ENCODE measurements at regions of chr14 and their contacts with region 1.

Region 1: DNA sequence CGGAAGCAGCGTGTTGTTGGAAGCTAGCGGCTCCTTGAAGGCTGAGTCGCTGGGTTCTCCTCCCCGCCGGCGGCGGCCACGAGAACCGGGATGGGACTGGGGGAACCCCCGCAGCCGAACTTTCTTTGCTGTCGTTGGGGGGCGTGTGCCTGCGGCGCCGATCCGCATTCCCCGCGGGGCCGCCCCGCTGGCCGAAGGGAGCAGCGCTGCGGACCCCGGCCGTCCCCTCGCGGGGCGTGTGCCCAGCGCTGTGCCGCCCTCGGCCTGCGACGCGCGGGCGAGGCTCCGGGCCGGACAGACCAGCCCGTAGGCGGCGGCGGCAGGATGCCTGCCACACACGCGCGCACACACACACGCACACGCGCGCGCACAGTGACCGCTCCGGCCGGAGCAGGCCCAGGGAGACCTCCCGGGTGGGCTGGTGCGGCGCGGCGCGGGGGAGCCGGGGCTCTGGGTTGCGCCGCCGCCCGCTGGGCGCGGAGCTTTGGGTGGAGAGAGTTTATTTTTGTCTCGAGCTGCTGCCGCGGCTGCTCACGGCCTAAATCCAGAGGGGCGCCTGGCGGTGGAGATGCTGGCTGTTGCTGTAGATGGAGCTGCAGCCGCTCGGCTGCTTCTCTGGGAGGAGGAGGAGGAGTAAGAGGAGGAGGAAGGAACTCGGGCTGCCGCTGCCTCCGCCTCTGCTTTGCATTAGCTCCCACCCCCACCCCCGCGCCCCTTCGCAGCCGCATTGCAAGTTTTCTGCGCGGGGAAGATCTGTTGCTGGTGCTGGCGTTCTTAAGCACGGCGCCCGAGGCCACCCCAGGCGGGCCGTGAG is at the start of gene SAMD4A:
- DNase-seq: peak; percentile 63
- ATAC-seq: peak; percentile 30
- H3K4me3 Mint-ChIP-seq: peak within 1 kb of the TSS; percentile 99
- H3K27ac Mint-ChIP-seq: peak within 1 kb of the TSS; percentile 96
- H3K4me1 Mint-ChIP-seq: peaks cover 28% of the 10 kb centered on the region
- H3K27me3 Mint-ChIP-seq: peaks cover 4% of the 10 kb centered on the region
- CTCF ChIP-seq: no peak
- total RNA-seq, gene SAMD4A: 6.4 and 8.7 TPM in 2 replicates

Region 2: GRCh38 chr14:54381821-54382220 is 184.8 kb before region 1 on chr14:
- CTCF ChIA-PET with region 1: no interaction called
- POLR2A ChIA-PET with region 1: no interaction called
- intact Hi-C with region 1: no loop called
- DNase-seq: no peak
- ATAC-seq: no peak
- H3K4me3 Mint-ChIP-seq: no peak overlapping the region
- H3K27ac Mint-ChIP-seq: no peak overlapping the region
- H3K4me1 Mint-ChIP-seq: peaks cover 25% of the 10 kb centered on the region
- H3K27me3 Mint-ChIP-seq: peaks cover 24% of the 10 kb centered on the region
- CTCF ChIP-seq: no peak

Region 3: GRCh38 chr14:54396493-54397335 is 169.9 kb before region 1 on chr14 and contains the start of gene CDKN3:
- CTCF ChIA-PET with region 1: no interaction called
- POLR2A ChIA-PET with region 1: interaction called, 3 read pairs
- intact Hi-C with region 1: loop called (anchors 1 kb)
- DNase-seq: peak; percentile 94
- ATAC-seq: peak; percentile 94
- H3K4me3 Mint-ChIP-seq: peak within 1 kb of the TSS; percentile 86
- H3K27ac Mint-ChIP-seq: peak within 1 kb of the TSS; percentile 82
- H3K4me1 Mint-ChIP-seq: peaks cover 23% of the 10 kb centered on the region
- H3K27me3 Mint-ChIP-seq: no peaks in the 10 kb centered on the region
- CTCF ChIP-seq: no peak
- total RNA-seq, gene CDKN3: 0.91 and 1.6 TPM in 2 replicates

Region 4: DNA sequence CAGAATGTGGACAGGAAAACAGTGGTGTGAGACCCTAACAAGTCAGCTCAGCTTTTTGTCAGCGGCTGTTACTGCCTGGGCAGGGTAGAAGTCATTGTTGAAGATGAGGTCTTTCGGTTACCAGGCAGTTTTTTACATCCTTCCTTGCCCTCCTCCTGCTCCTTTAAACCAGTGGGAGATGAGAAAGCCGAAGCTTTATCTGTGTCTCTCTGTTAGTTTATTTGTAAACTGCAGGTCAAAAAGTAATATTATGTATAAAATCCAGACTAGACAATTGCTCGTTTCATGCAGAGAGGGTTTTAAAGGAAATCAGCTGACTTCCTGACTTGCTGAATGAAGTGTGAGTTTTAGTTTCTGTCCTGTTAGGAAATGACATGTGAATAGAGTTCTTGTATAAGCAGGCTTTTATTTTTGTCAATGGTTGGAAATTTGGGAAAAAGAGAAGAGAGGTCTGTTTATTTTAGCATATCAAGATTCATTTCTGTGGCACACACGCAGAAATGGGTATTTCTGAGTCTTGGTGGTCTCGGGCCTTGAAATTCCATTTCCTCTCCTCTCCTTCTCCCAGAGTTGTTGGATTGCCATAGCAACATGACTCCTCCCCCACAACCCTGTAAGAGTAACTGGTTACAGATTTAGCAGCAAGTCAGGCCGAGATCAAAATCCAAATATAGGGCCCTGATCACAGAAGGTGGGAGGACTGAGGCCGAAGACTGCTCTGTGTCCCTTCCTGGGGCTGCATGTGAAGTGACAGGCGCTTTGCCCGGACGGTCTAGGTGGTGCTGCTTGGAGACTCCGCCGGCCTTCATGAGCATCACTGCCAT is 61.1 kb after region 1 on chr14:
- CTCF ChIA-PET with region 1: interaction called, 5 read pairs
- POLR2A ChIA-PET with region 1: interaction called, 27 read pairs
- intact Hi-C with region 1: loop called (anchors 1 kb)
- DNase-seq: no peak
- ATAC-seq: peak; percentile 69
- H3K4me3 Mint-ChIP-seq: peak overlapping the region; percentile 79
- H3K27ac Mint-ChIP-seq: peak overlapping the region; percentile 91
- H3K4me1 Mint-ChIP-seq: peaks cover 51% of the 10 kb centered on the region
- H3K27me3 Mint-ChIP-seq: no peaks in the 10 kb centered on the region
- CTCF ChIP-seq: no peak

Region 5: DNA sequence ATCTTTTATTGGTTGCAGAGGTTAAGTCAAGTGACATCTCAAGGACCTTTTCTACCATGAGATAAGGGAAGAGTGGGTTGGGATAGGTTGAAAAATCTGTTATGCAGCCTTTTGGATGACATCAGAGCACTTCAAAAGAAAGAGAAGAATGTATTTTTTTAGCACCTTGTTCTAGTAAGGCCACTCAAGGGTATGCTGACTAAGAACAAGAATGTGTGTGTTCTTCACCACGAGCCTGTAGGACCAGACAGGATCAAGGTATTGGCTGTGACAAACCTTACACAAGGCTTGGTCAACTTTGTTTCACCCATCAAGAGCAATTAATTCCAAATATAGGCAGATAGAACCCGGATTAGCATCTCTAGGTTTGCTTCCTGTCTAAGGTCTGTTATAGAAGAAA is 142.8 kb after region 1 on chr14:
- CTCF ChIA-PET with region 1: no interaction called
- POLR2A ChIA-PET with region 1: no interaction called
- intact Hi-C with region 1: no loop called
- DNase-seq: no peak
- ATAC-seq: peak; percentile 58
- H3K4me3 Mint-ChIP-seq: no peak overlapping the region
- H3K27ac Mint-ChIP-seq: no peak overlapping the region
- H3K4me1 Mint-ChIP-seq: peaks cover 30% of the 10 kb centered on the region
- H3K27me3 Mint-ChIP-seq: no peaks in the 10 kb centered on the region
- CTCF ChIP-seq: no peak

Region 6: GRCh38 chr14:54730156-54730961 is 163.7 kb after region 1 on chr14:
- CTCF ChIA-PET with region 1: interaction called, 8 read pairs
- POLR2A ChIA-PET with region 1: interaction called, 16 read pairs
- intact Hi-C with region 1: loop called (anchors 1 kb)
- DNase-seq: no peak
- ATAC-seq: peak; percentile 90
- H3K4me3 Mint-ChIP-seq: peak overlapping the region; percentile 78
- H3K27ac Mint-ChIP-seq: peak overlapping the region; percentile 88
- H3K4me1 Mint-ChIP-seq: peaks cover 22% of the 10 kb centered on the region
- H3K27me3 Mint-ChIP-seq: no peaks in the 10 kb centered on the region
- CTCF ChIP-seq: no peak

Region 7: DNA sequence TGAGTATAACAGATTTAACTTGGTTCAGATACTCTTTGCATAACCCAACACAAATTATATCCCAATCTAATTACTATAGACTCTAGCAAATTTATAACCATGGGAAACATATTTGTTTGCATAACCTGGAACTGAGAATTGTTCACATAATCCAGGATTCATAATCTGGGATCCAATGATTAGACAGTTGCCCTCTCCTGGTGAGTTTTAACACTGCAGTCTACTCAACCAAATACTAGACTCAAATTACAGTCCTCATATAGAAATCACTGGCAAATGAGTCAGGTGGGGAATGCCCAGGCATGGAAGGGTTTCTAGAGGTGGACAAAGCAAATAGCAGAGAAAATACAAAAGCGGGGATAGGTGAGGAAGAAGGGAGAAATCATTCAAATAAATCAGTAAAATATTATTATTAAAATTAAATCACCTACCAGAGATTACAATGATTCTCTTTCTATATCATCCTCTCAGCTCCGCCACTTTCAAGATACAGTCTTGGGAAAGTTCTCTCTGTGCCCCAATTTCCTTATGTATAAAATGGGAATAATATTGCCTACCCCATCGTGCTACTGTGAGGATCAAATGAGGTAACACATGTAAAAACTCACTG is 326.6 kb after region 1 on chr14:
- CTCF ChIA-PET with region 1: interaction called, 4 read pairs
- POLR2A ChIA-PET with region 1: no interaction called
- intact Hi-C with region 1: loop called (anchors 1 kb)
- DNase-seq: no peak
- ATAC-seq: peak; percentile 79
- H3K4me3 Mint-ChIP-seq: no peak overlapping the region
- H3K27ac Mint-ChIP-seq: no peak overlapping the region
- H3K4me1 Mint-ChIP-seq: peaks cover 33% of the 10 kb centered on the region
- H3K27me3 Mint-ChIP-seq: no peaks in the 10 kb centered on the region
- CTCF ChIP-seq: peak; percentile 79

Region 8: GRCh38 chr14:55051426-55052268 is 485.0 kb after region 1 on chr14 and contains the start of gene MAPK1IP1L:
- CTCF ChIA-PET with region 1: no interaction called
- POLR2A ChIA-PET with region 1: no interaction called
- intact Hi-C with region 1: loop called (anchors 2 kb)
- DNase-seq: peak; percentile 97
- ATAC-seq: peak; percentile 94
- H3K4me3 Mint-ChIP-seq: peak within 1 kb of the TSS; percentile 94
- H3K27ac Mint-ChIP-seq: peak within 1 kb of the TSS; percentile 95
- H3K4me1 Mint-ChIP-seq: peaks cover 39% of the 10 kb centered on the region
- H3K27me3 Mint-ChIP-seq: no peaks in the 10 kb centered on the region
- CTCF ChIP-seq: peak; percentile 75
- total RNA-seq, gene MAPK1IP1L: 119 and 130 TPM in 2 replicates

Region 9: DNA sequence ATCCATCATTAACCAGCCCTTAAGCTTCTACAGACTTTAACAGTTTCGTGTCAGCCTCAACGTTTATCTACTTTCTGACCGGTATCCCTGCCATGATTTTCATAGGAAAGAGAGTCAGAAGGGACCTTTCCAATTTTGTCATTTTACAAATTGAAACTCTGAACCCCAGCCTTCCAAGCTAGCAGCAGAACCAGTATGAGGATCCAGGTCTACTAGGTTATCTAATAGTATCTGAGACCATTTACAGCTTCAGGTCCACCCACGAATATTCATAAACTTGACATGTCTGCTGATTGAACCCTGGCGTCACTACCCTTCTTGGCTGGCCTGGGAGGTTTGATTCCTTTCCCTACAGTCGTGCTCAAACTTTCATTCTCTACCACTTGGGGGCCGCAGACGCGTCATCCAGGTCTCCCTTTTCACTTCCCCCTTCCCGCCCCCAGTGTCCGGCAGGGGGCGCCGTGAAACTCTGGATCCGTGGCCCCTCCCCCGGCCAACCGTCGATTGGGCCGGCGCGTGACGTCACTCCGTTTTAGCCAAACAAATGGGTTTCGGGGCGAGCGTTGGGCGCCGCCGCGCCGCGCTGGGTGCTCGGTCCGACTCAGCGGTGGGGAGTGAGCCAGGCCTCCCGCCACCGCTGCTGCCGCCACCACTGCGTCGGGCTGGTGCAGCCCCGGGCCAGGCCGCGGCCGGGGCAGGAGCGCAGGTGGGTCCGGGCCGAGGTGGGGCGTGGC is 704.4 kb after region 1 on chr14 and contains the start of gene FBXO34:
- CTCF ChIA-PET with region 1: no interaction called
- POLR2A ChIA-PET with region 1: no interaction called
- intact Hi-C with region 1: loop called (anchors 5 kb)
- DNase-seq: peak; percentile 100
- ATAC-seq: peak; percentile 89
- H3K4me3 Mint-ChIP-seq: peak within 1 kb of the TSS; percentile 90
- H3K27ac Mint-ChIP-seq: peak within 1 kb of the TSS; percentile 87
- H3K4me1 Mint-ChIP-seq: peaks cover 34% of the 10 kb centered on the region
- H3K27me3 Mint-ChIP-seq: no peaks in the 10 kb centered on the region
- CTCF ChIP-seq: peak; percentile 94
- total RNA-seq, gene FBXO34: 19.7 and 20.4 TPM in 2 replicates